MCF 10A (cell line): ENCODE measurements at regions of chr13 and their contacts with region 1.

Region 1: DNA sequence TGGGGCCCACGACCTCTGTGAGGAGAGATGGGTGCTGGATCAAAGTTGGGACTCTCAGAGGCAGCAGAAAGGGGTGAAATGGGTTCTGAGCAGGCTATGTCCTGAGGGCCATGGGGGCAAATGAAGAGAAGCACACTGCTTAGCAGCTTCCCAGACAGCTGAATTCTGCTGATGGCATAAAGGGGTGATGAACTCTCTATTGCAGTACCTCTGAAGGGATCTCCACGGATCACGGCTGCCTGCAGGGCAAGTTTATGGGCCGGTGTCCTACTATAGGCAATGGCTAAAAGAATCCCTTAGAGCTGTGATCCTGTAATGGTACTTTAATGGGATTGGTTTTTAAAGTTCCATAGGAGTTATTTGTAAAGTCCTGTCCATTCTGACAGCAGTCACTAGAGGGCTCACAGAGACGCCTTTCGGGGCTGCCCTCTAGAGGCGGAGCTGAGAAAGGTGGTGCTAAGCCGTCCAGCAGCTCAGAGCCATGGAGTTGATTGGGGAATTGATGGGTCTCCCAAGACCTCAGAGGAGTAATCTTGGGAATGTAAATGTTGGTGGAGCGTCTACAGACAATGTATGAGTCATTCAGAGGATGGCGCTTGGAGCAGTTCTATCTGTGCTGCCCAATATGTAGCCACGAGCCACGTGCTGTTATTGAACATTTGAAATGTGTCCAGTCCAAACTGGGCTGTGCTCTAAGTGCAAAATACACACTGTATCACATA is 287.3 kb downstream of the COG6 start:
- DNase-seq: peak; percentile 95
- H3K4me3 Mint-ChIP-seq: no peak overlapping the region
- H3K27ac Mint-ChIP-seq: peak overlapping the region; percentile 88
- H3K4me1 Mint-ChIP-seq: peaks cover 21% of the 10 kb centered on the region
- H3K27me3 Mint-ChIP-seq: no peaks in the 10 kb centered on the region
- CTCF ChIP-seq: peak; percentile 98

Region 2: DNA sequence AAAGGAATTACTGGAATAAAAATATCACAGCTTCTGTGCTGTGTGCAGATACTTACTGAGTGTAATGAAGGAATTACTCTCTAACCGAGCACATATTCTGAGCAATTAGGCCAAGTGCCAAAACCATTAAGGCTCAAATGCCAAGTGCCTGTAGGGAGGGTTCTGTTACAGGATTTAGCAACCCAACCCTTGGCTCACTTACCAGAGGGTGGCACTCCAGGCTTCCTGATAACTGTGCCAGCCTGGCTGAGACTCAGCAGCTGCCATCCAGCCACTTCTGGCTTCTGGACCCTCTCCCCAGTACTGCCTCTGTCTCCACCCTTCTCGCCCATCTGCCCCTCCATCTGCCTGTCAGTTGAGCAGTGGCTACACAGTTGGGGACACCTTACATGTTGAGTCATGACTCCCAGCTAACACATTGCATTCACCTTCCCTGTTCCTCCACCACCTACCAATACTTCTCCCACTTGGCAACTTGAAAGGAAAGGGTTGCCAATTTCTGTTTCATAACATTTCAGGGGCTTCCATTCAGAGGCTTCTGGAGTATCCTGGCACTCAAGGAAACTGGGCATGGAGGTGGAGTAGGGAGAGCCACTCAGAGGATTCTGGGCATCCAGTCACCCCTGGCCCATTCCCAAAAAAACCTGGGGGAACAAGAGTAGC is 176.8 kb before region 1 on chr13:
- CTCF ChIA-PET with region 1: interaction called, 3 read pairs
- POLR2A ChIA-PET with region 1: interaction called, 3 read pairs
- intact Hi-C with region 1: loop called (anchors 5 kb)
- DNase-seq: peak; percentile 91
- H3K4me3 Mint-ChIP-seq: no peak overlapping the region
- H3K27ac Mint-ChIP-seq: no peak overlapping the region
- H3K4me1 Mint-ChIP-seq: peaks cover 32% of the 10 kb centered on the region
- H3K27me3 Mint-ChIP-seq: no peaks in the 10 kb centered on the region
- CTCF ChIP-seq: peak; percentile 48

Region 3: DNA sequence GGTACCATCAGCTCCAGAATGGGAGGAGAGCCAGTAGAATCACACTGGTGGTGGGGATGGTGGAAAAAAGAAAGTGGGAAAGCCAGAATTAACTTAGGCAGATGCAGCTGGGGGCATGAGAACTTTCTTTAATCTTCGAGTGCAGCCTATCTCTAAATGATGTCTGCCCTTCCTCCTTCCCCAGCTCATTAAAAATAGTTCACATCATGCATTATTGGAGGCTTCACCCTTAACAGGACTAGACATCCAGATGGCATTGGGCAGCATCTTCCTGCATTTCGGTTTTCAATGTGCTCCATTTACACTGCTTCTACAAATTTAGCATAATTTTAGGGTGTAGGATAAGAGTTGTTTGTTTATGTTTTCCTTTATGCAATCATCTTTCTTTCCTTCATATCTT is 14.5 kb before region 1 on chr13:
- CTCF ChIA-PET with region 1: interaction called, 12 read pairs
- POLR2A ChIA-PET with region 1: interaction called, 3 read pairs
- intact Hi-C with region 1: no loop called
- DNase-seq: no peak
- H3K4me3 Mint-ChIP-seq: no peak overlapping the region
- H3K27ac Mint-ChIP-seq: no peak overlapping the region
- H3K4me1 Mint-ChIP-seq: peaks cover 4% of the 10 kb centered on the region
- H3K27me3 Mint-ChIP-seq: no peaks in the 10 kb centered on the region
- CTCF ChIP-seq: no peak

Region 4: DNA sequence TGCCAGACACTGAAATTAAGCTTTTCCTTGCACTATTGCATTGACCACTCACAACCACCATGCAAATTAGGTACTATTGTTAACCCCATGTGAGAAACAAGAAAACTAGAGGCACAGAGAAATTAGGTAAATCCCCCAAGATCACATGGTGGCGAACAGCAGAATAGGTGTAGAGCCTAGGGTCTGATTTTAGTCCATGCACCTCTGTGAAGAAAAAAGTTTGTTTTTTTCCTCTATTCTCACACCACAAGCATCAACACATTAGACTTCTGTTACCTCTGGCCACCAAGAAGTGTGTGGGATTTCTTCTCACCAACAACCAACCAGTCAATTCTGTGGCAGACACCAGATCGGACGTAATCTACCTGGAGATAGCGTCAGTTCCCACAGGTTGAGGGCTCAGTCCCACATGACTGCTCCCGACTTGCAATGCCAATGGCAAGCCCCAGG is 104.6 kb after region 1 on chr13:
- CTCF ChIA-PET with region 1: no interaction called
- POLR2A ChIA-PET with region 1: no interaction called
- intact Hi-C with region 1: no loop called
- DNase-seq: no peak
- H3K4me3 Mint-ChIP-seq: no peak overlapping the region
- H3K27ac Mint-ChIP-seq: no peak overlapping the region
- H3K4me1 Mint-ChIP-seq: peaks cover 6% of the 10 kb centered on the region
- H3K27me3 Mint-ChIP-seq: no peaks in the 10 kb centered on the region
- CTCF ChIP-seq: no peak

Region 5: DNA sequence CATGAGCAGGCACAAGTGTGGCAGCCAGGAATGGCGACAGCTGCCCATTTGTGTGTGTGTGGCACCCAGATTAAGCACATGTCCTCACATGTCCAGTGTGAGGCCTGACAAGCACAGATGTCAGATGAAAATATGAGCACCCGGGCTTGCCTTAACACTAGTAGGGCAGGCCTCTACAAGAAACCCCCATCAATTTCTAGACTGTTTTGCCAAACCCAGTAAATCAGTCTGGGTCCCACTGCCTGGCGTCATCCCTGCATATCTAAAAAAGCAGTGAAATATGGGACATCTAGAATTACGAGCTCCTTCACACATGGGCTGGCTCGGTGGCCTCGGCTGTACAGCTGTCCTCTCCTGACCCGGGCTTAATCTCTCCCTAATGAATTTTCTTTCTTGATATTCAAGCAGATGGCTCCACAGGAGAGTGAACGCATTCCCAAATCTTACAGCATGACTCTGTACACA is 291.1 kb after region 1 on chr13:
- CTCF ChIA-PET with region 1: interaction called, 4 read pairs
- POLR2A ChIA-PET with region 1: interaction called, 4 read pairs
- intact Hi-C with region 1: loop called (anchors 2 kb)
- DNase-seq: peak; percentile 24
- H3K4me3 Mint-ChIP-seq: no peak overlapping the region
- H3K27ac Mint-ChIP-seq: no peak overlapping the region
- H3K4me1 Mint-ChIP-seq: peaks cover 66% of the 10 kb centered on the region
- H3K27me3 Mint-ChIP-seq: no peaks in the 10 kb centered on the region
- CTCF ChIP-seq: no peak

Region 6: GRCh38 chr13:40682449-40683240 is 739.9 kb after region 1 on chr13:
- CTCF ChIA-PET with region 1: interaction called, 12 read pairs
- POLR2A ChIA-PET with region 1: interaction called, 4 read pairs
- intact Hi-C with region 1: loop called (anchors 2 kb)
- DNase-seq: peak; percentile 25
- H3K4me3 Mint-ChIP-seq: no peak overlapping the region
- H3K27ac Mint-ChIP-seq: peak overlapping the region; percentile 13
- H3K4me1 Mint-ChIP-seq: peaks cover 14% of the 10 kb centered on the region
- H3K27me3 Mint-ChIP-seq: no peaks in the 10 kb centered on the region
- CTCF ChIP-seq: peak; percentile 49